Activated CD8-positive, alpha-beta memory T cell treated with anti-CD3 and anti-CD28 coated beads, Interleukin-2, amount 10 ng/mL, durations not matched to agents 7 days and 5 days (primary cell): ENCODE measurements at regions of chr11 and their contacts with region 1.

Region 1: GRCh38 chr11:64152841-64153691 is 12.8 kb downstream of the MACROD1 start:
- DNase-seq: peak; percentile 76
- ATAC-seq: peak; percentile 96
- H3K4me3 Mint-ChIP-seq: no peak overlapping the region
- H3K27ac Mint-ChIP-seq: no peak overlapping the region
- H3K4me1 Mint-ChIP-seq: no peaks in the 10 kb centered on the region
- H3K27me3 Mint-ChIP-seq: peaks cover 9% of the 10 kb centered on the region

Region 2: DNA sequence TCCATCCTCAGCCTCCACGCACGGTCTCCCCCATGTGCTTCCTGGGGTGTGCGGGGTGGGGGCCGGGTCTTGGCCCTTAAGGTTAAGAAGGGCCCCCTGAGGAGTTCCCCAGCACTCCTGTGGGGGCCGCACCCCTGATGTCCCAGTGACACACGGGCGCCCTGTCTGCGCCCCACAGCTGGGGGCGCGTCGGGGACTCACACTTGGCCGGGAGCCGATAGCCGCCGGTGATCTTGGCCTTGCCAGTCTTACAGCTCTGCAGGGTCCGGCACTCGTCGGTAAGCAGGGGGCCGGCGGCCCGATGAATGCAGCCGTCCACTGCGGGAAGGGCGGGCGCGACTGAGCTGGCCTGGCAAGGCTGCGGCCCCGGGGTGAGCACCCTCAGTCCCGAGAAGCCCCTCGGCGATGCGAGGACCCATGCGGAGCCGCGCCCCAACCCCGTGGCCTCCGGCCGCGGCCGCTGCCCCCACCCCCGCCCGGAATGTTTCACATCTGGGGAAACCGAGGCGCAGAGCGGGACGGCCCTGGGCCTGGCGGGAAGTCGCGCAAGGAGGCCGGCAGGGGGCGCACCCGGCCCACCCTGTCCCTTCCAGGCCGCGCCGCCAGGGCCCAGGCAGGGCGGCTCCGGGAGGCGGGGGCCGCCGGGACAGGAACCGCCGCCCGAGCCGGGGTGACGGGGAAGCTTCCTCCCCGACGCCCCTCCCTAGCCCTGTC is 152.9 kb before region 1 on chr11:
- CTCF ChIA-PET with region 1: interaction called, 123 read pairs
- DNase-seq: peak; percentile 77
- ATAC-seq: peak; percentile 89
- H3K4me3 Mint-ChIP-seq: no peak overlapping the region
- H3K27ac Mint-ChIP-seq: no peak overlapping the region
- H3K4me1 Mint-ChIP-seq: peaks cover 5% of the 10 kb centered on the region
- H3K27me3 Mint-ChIP-seq: peaks cover 7% of the 10 kb centered on the region

Region 3: DNA sequence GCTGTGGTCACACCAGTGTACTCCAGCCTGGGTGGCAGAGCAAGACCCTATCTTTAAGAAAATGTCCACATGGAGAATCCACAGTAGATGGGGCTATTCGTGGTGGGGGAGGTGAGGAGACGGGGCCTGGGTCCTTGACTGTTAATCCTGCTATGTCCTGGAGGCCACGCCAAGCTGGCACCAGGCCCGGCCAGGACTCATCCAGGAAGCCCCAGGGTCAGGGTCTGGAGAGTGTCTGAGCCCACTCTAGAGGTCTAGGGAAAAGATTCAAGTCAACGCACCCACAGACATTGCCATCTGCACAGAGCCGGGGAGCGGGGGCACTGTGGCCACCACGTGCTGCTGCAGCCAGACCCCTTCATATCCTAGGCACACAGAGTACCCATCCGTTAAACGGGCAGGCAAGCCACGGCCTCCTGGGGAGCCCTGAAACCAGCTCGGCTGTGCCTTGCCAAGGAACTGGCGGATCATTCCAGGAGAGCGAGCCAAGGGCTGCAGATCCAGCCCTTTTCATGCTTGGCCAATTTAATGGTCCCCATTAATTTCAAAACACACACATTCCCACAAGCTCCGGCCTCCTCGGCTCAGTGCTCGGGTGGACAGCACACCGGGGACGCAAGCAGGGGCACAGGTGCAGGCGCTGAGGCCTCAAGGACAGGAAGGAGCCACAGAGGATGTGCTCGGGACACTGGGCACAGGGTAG is 11.8 kb before region 1 on chr11:
- CTCF ChIA-PET with region 1: interaction called, 10 read pairs
- DNase-seq: no peak
- ATAC-seq: no peak
- H3K4me3 Mint-ChIP-seq: no peak overlapping the region
- H3K27ac Mint-ChIP-seq: no peak overlapping the region
- H3K4me1 Mint-ChIP-seq: peaks cover 3% of the 10 kb centered on the region
- H3K27me3 Mint-ChIP-seq: no peaks in the 10 kb centered on the region

Region 4: DNA sequence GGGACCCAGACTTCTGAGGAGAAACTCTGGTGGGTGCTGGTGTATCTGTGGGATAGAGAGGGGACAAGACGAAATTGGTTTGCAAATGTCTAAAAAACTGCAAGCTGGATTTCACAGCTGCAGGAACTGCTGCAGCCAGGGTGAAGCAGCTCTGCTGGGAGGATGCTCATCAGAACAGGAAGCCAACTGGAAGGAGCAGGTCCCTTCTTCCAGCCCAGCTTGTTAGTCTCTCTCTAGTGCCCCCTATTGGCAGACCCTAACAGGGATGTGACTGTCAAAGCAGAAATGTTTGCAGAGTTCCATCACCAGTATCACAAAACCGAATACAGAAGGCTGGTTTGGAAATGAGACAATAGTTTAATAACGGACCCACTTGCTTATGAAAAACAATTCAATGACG is 363.2 kb after region 1 on chr11:
- CTCF ChIA-PET with region 1: no interaction called
- DNase-seq: peak; percentile 44
- ATAC-seq: no peak
- H3K4me3 Mint-ChIP-seq: no peak overlapping the region
- H3K27ac Mint-ChIP-seq: no peak overlapping the region
- H3K4me1 Mint-ChIP-seq: no peaks in the 10 kb centered on the region
- H3K27me3 Mint-ChIP-seq: peaks cover 19% of the 10 kb centered on the region